ENCODE measurements at regions of chr15 and their contacts with region 1.

Region 1: GRCh38 chr15:31488426-31489204 is 162.0 kb downstream of the KLF13 start:
- DNase-seq: peak; percentile 78
- ATAC-seq: peak; percentile 73
- H3K4me3 ChIP-seq: no peak overlapping the region
- H3K27ac ChIP-seq: peak overlapping the region; percentile 49
- H3K4me1 ChIP-seq: peaks cover 18% of the 10 kb centered on the region
- H3K27me3 ChIP-seq: no peaks in the 10 kb centered on the region
- CTCF ChIP-seq: peak; percentile 71 to 93 (median 91)
- EP300 ChIP-seq: no peak
- POLR2A ChIP-seq: no peak
- RAD21 ChIP-seq: peak; percentile 84

Region 2: DNA sequence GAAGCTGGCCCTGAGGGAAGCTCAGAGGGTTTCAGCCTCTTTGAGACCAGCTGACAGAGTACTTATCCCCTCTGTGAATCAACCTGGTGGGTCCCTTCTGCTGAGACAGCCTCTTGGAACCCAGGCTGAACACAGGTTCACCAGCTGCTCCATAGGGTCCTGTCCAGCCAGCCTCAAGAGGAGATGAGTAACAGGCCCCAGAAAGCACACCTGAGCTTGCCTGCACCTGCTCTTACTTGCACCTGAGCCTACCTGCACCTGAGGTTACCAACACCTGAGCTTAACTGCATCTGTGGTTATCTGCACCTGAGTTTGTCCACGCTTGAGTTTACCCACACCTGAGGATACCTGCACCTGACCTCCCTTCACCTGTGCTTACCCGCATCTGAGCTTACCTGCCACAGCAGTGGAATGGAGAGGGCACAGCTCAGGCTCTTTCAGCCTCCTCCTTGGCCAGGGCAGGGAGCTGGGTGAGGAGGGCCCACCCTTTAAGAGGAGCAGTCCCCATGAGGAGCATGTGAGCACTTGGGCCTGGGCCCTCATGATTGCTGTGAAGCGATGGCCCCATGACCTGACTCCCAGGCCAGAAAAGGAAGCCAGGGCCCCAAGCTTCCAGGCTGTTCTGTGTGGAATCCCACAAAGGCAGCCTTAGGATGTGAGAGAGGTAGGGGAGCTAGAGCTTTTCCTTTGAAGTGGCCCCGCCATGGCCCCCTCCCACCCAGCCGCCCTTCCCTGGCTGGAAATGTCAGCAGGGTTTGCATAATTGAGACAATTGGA is 387.2 kb before region 1 on chr15 and contains the start of gene TRPM1:
- CTCF ChIA-PET with region 1: no interaction called
- POLR2A ChIA-PET with region 1: no interaction called
- RAD21 ChIA-PET with region 1: no interaction called
- SMC1A ChIA-PET with region 1: no interaction called
- in situ Hi-C with region 1: no loop called
- intact Hi-C with region 1: no loop called
- DNase-seq: no peak
- ATAC-seq: no peak
- H3K4me3 ChIP-seq: no peak within 1 kb of the TSS
- H3K27ac ChIP-seq: no peak within 1 kb of the TSS
- H3K4me1 ChIP-seq: 0 out of 2 replicates have a peak, but pooled peaks cover 6% of the 10 kb centered on the region
- H3K27me3 ChIP-seq: no peaks in the 10 kb centered on the region
- CTCF ChIP-seq: no peak
- EP300 ChIP-seq: no peak
- POLR2A ChIP-seq: no peak
- RAD21 ChIP-seq: no peak
- polyA plus RNA-seq, gene TRPM1: 0.02 to 0.10 TPM

Region 3: DNA sequence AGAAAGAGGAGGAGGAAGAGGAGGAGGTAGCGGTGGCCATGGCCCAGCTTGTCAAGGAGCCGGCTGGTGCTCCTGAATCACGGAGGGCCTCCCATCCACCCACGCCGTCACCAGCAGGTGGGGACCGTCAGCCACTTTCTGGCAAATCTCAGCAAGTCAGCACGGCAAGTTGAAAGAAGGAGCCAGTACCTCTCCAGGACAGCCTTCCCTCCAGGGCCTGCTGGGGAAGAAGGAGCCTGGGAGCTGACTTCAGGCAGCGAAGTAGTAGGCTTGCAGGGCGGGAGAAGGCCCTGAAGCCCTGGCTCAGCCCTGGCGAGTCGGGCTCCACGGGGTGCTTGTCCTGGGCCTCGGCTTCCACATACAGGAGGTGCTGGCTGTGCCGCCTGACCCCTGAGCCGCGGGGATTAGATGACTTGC is 287.9 kb before region 1 on chr15:
- CTCF ChIA-PET with region 1: interaction called, 197 read pairs
- POLR2A ChIA-PET with region 1: interaction called, 3 read pairs
- RAD21 ChIA-PET with region 1: interaction called, 82 read pairs
- SMC1A ChIA-PET with region 1: interaction called, 70 read pairs
- in situ Hi-C with region 1: loop called (anchors 5 kb)
- intact Hi-C with region 1: loop called (anchors 1 kb)
- DNase-seq: no peak
- ATAC-seq: peak; percentile 83
- H3K4me3 ChIP-seq: no peak overlapping the region
- H3K27ac ChIP-seq: no peak overlapping the region
- H3K4me1 ChIP-seq: peaks cover 30% of the 10 kb centered on the region
- H3K27me3 ChIP-seq: no peaks in the 10 kb centered on the region
- CTCF ChIP-seq: peak; percentile 61 to 88 (median 74)
- EP300 ChIP-seq: no peak
- POLR2A ChIP-seq: no peak
- RAD21 ChIP-seq: peak; percentile 79

Region 4: DNA sequence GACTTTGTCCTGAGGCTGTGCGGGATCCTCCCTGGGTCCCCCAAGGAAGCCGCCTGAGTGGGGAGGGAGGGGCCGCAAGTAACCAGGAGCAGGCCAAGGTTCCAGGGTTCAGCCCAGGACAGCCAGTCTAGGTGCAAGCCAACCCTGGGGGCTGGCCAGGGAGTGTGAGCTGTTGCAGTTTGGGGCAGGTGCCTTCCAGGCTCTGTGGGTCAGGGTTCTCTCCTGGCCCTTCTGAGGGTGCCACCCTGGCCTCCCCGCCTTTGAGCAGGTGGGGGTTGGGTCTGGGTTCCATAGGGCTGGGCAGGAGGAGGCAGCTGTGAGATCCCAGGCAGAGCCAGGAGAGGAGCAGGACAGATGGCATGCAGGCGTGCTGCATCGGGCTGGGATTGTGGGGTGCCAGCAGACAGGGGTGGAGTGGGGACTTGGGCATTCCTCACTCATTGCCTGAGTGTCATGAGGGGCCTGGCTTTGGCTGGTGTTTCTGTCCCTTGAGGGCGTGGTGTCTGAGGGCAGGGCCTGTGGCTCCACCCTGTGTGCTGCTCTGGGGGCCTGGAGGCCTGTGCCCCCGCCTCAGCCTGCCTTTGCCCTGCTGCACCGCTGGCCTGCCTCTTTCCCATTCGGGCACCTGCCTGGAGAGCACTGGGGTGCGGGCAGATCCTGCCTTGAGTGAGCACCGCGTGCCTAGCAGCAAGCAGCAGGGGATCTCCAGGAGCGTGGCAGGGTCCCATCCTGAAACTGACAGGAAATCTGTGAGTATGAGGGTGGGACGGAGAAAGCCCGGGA is 143.6 kb before region 1 on chr15:
- CTCF ChIA-PET with region 1: interaction called, 13 read pairs
- POLR2A ChIA-PET with region 1: interaction called, 3 read pairs
- RAD21 ChIA-PET with region 1: interaction called, 8 read pairs
- SMC1A ChIA-PET with region 1: interaction called, 4 read pairs
- in situ Hi-C with region 1: no loop called
- intact Hi-C with region 1: no loop called
- DNase-seq: no peak
- ATAC-seq: peak; percentile 68
- H3K4me3 ChIP-seq: peak overlapping the region; percentile 80
- H3K27ac ChIP-seq: peak overlapping the region; percentile 96
- H3K4me1 ChIP-seq: peaks cover 87% of the 10 kb centered on the region
- H3K27me3 ChIP-seq: no peaks in the 10 kb centered on the region
- CTCF ChIP-seq: no peak
- EP300 ChIP-seq: no peak
- POLR2A ChIP-seq: peak; percentile 65
- RAD21 ChIP-seq: no peak

Region 5: GRCh38 chr15:31365655-31366127 is 122.9 kb before region 1 on chr15:
- CTCF ChIA-PET with region 1: interaction called, 31 read pairs
- POLR2A ChIA-PET with region 1: no interaction called
- RAD21 ChIA-PET with region 1: interaction called, 41 read pairs
- SMC1A ChIA-PET with region 1: interaction called, 18 read pairs
- in situ Hi-C with region 1: no loop called
- intact Hi-C with region 1: loop called (anchors 1 kb)
- DNase-seq: no peak
- ATAC-seq: peak; percentile 81
- H3K4me3 ChIP-seq: peak overlapping the region; percentile 20; the same call in 1 of the 2 replicates
- H3K27ac ChIP-seq: peak overlapping the region; percentile 41
- H3K4me1 ChIP-seq: peaks cover 75% of the 10 kb centered on the region
- H3K27me3 ChIP-seq: no peaks in the 10 kb centered on the region
- CTCF ChIP-seq: peak; percentile 32 to 57 (median 50); a peak in 4 of 6 replicates
- EP300 ChIP-seq: no peak
- POLR2A ChIP-seq: no peak
- RAD21 ChIP-seq: 0 out of 2 replicates have a peak, but pooled peaks have one; percentile 38

Region 6: GRCh38 chr15:31458591-31459399 is 29.8 kb before region 1 on chr15:
- CTCF ChIA-PET with region 1: interaction called, 46 read pairs
- POLR2A ChIA-PET with region 1: interaction called, 8 read pairs
- RAD21 ChIA-PET with region 1: interaction called, 30 read pairs
- SMC1A ChIA-PET with region 1: interaction called, 20 read pairs
- in situ Hi-C with region 1: no loop called
- intact Hi-C with region 1: no loop called
- DNase-seq: peak; percentile 77
- ATAC-seq: peak; percentile 96
- H3K4me3 ChIP-seq: peak overlapping the region; percentile 4; the same call in 1 of the 2 replicates
- H3K27ac ChIP-seq: peak overlapping the region; percentile 24; the same call in 1 of the 2 replicates
- H3K4me1 ChIP-seq: peaks cover 22% of the 10 kb centered on the region
- H3K27me3 ChIP-seq: no peaks in the 10 kb centered on the region
- CTCF ChIP-seq: no peak
- EP300 ChIP-seq: peak; percentile 47 to 55; a peak in 2 of 4 replicates
- POLR2A ChIP-seq: no peak
- RAD21 ChIP-seq: no peak

Region 7: GRCh38 chr15:31499953-31500765 is 11.5 kb after region 1 on chr15:
- CTCF ChIA-PET with region 1: interaction called, 14 read pairs
- POLR2A ChIA-PET with region 1: no interaction called
- RAD21 ChIA-PET with region 1: interaction called, 4 read pairs
- SMC1A ChIA-PET with region 1: interaction called, 4 read pairs
- in situ Hi-C with region 1: no loop called
- intact Hi-C with region 1: no loop called
- DNase-seq: no peak
- ATAC-seq: no peak
- H3K4me3 ChIP-seq: no peak overlapping the region
- H3K27ac ChIP-seq: no peak overlapping the region
- H3K4me1 ChIP-seq: peaks cover 4% of the 10 kb centered on the region
- H3K27me3 ChIP-seq: no peaks in the 10 kb centered on the region; a peak in 1 of 4 replicates
- CTCF ChIP-seq: no peak
- EP300 ChIP-seq: no peak
- POLR2A ChIP-seq: no peak
- RAD21 ChIP-seq: no peak

Region 8: GRCh38 chr15:31540633-31541032 is 52.0 kb after region 1 on chr15:
- CTCF ChIA-PET with region 1: no interaction called
- POLR2A ChIA-PET with region 1: no interaction called
- RAD21 ChIA-PET with region 1: no interaction called
- SMC1A ChIA-PET with region 1: no interaction called
- in situ Hi-C with region 1: no loop called
- intact Hi-C with region 1: loop called (anchors 10 kb)
- DNase-seq: no peak
- ATAC-seq: no peak
- H3K4me3 ChIP-seq: no peak overlapping the region
- H3K27ac ChIP-seq: no peak overlapping the region
- H3K4me1 ChIP-seq: no peaks in the 10 kb centered on the region
- H3K27me3 ChIP-seq: no peaks in the 10 kb centered on the region; a peak in 1 of 4 replicates
- CTCF ChIP-seq: no peak
- EP300 ChIP-seq: no peak
- POLR2A ChIP-seq: no peak
- RAD21 ChIP-seq: no peak

Region 9: DNA sequence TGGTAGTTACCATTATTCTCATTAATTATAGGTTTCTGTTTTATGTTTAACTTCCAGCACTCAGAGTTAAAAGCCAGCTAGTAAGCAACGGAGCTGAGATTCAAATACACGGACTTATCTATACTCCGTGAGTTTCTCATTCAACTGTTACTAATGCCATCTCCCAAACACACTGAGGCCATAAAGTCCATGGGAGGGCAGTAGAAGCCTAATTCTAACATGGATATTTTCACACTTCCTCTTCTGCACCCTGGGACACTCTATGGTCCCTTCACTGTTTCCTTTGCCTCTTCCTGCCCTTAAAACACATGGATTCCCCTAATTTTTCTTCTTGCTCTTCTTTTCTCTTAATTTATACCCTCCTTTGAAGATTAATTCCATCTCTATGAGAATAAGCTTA is 83.1 kb after region 1 on chr15:
- CTCF ChIA-PET with region 1: no interaction called
- POLR2A ChIA-PET with region 1: no interaction called
- RAD21 ChIA-PET with region 1: no interaction called
- SMC1A ChIA-PET with region 1: no interaction called
- in situ Hi-C with region 1: no loop called
- intact Hi-C with region 1: no loop called
- DNase-seq: no peak
- ATAC-seq: no peak
- H3K4me3 ChIP-seq: no peak overlapping the region
- H3K27ac ChIP-seq: no peak overlapping the region
- H3K4me1 ChIP-seq: no peaks in the 10 kb centered on the region
- H3K27me3 ChIP-seq: no peaks in the 10 kb centered on the region
- CTCF ChIP-seq: no peak; a peak in 1 of 6 replicates
- EP300 ChIP-seq: no peak
- POLR2A ChIP-seq: no peak
- RAD21 ChIP-seq: 0 out of 2 replicates have a peak, but pooled peaks have one; percentile 5